ENCODE measurements at regions of chr9 and their contacts with region 1.

Region 1: DNA sequence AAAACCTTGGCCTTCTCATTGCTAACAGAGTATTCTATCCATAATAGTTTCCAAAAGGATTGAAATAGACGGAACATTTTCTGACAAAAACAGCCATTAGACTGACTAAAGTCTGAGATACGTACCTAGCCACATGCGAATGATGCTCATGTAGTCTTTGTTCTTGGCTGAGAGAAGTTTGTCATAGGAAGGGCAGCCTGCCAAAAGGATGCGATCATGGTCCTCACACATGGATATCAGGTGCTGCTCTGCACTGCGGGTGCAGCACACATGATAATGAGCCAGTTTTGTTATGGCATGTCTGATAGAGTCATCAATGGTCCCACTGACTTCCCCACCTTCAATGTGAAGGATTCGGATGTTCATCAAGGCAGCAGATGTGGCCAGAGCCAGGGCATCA is 12.3 kb downstream of the GNE start:
- DNase-seq: no peak
- H3K4me3 ChIP-seq: no peak overlapping the region
- H3K27ac ChIP-seq: no peak overlapping the region
- H3K4me1 ChIP-seq: peaks cover 6% of the 10 kb centered on the region
- CTCF ChIP-seq: no peak

Region 2: DNA sequence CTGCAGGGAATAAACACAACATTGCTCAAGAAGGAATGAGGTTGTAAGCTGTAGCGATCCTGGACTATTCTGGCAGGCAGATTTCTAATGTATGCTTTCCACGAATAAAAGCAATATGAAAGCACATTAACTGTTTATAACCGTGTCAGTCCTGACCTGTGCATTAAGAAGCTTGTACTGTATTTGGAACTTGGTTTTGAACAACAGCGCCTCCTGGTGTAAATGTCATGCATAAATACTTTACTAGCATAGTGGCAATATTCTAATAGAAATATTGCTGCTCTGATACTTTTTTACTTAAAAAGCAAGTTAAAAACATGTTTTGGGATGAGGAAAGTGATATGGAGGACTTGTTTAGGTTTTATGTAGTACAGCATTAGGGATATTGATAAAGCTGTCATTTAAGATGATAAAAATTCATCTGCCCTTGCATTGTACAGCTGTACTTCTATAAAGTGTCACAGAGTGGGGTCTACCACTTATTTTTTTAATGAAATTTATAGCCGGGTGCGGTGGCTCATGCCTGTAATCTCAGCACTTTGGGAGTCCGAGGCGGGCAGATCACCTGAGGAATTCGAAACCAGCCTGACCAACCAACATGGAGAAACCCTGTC is 83.0 kb after region 1 on chr9:
- CTCF ChIA-PET with region 1: no interaction called
- POLR2A ChIA-PET with region 1: interaction called, 5 read pairs
- intact Hi-C with region 1: loop called (anchors 1 kb)
- DNase-seq: peak; percentile 78
- H3K4me3 ChIP-seq: no peak overlapping the region
- H3K27ac ChIP-seq: no peak overlapping the region
- H3K4me1 ChIP-seq: no peaks in the 10 kb centered on the region
- CTCF ChIP-seq: peak; percentile 96

Region 3: GRCh38 chr9:36407122-36407723 is 161.3 kb after region 1 on chr9:
- CTCF ChIA-PET with region 1: no interaction called
- POLR2A ChIA-PET with region 1: no interaction called
- intact Hi-C with region 1: no loop called
- DNase-seq: peak; percentile 74
- H3K4me3 ChIP-seq: no peak overlapping the region
- H3K27ac ChIP-seq: no peak overlapping the region
- H3K4me1 ChIP-seq: no peaks in the 10 kb centered on the region
- CTCF ChIP-seq: peak; percentile 96

Region 4: GRCh38 chr9:36781533-36781932 is 535.6 kb after region 1 on chr9:
- CTCF ChIA-PET with region 1: no interaction called
- POLR2A ChIA-PET with region 1: no interaction called
- intact Hi-C with region 1: no loop called
- DNase-seq: no peak
- H3K4me3 ChIP-seq: no peak overlapping the region
- H3K27ac ChIP-seq: no peak overlapping the region
- H3K4me1 ChIP-seq: no peaks in the 10 kb centered on the region
- CTCF ChIP-seq: no peak

Region 5: GRCh38 chr9:37025071-37025822 is 779.3 kb after region 1 on chr9:
- CTCF ChIA-PET with region 1: no interaction called
- POLR2A ChIA-PET with region 1: no interaction called
- intact Hi-C with region 1: no loop called
- DNase-seq: no peak
- H3K4me3 ChIP-seq: peak overlapping the region; percentile 88
- H3K27ac ChIP-seq: no peak overlapping the region
- H3K4me1 ChIP-seq: peaks cover 82% of the 10 kb centered on the region
- CTCF ChIP-seq: no peak